T-cell (primary cell): ENCODE measurements at regions of chr16 and their contacts with region 1.

Region 1: GRCh38 chr16:11797166-11797956 is at the start of gene ZC3H7A:
- DNase-seq: peak; percentile 83 to 97 (median 91)
- ATAC-seq: peak; percentile 93 to 98 (median 98)
- H3K4me3 ChIP-seq: peak within 1 kb of the TSS; percentile 86 to 96
- H3K4me3 Mint-ChIP-seq: peak within 1 kb of the TSS; percentile 92 to 94 (median 93)
- H3K27ac ChIP-seq: peak within 1 kb of the TSS; percentile 94
- H3K27ac Mint-ChIP-seq: peak within 1 kb of the TSS; percentile 94 to 98
- H3K4me1 ChIP-seq: peaks cover 29 to 62% of the 10 kb centered on the region in 2 experiments
- H3K4me1 Mint-ChIP-seq: peaks cover 73 to 80% (median 79%) of the 10 kb centered on the region in 3 donors
- H3K27me3 ChIP-seq: no peaks in the 10 kb centered on the region
- H3K27me3 Mint-ChIP-seq: no peaks in the 10 kb centered on the region
- total RNA-seq, gene ZC3H7A: 57.6 to 115 (median 68.2) TPM

Region 2: DNA sequence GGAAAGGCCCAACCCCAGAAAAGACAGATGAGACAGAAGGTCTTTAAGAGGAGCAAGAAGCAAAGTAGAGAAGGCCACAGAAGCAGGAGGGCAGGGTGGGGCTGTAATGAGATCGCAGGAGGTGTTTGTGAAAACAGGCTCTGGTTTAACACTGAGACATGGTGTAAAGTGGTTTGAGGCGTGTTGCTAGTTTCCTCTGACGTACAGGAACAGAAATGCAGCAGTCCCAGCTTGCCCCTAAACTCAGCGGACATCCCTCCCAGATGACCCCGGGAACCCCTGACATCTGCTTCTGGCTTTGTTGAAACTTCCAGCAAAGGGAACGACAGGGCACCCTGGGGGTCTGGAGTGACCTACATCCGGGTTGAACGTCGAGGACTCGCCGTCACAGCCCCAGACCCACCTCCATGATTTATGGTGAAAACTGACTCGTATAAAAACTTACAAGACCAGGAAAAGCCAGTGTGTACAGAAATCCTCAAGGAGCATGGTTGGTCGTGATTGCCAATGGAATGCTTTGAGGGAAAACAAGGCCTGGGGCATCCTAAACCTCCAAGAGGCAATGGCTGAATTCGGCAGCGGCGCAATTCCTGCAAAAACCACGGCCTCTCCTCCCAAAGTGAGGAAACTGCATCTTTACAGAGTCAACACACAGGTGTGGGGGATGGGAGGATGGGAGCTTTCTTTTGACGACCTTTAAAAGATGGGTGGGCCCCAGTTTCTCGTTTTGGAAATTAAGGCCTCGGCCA is 236.5 kb before region 1 on chr16:
- CTCF ChIA-PET with region 1: interaction called in 1 of 2 experiments, 11 read pairs
- POLR2A ChIA-PET with region 1: no interaction called
- DNase-seq: peak; percentile 45 to 94 (median 82)
- ATAC-seq: peak; percentile 91 to 96 (median 93)
- H3K4me3 ChIP-seq: peak overlapping the region; percentile 48 to 64
- H3K4me3 Mint-ChIP-seq: peak overlapping the region; percentile 73 to 83 (median 79)
- H3K27ac ChIP-seq: peak overlapping the region; percentile 95
- H3K27ac Mint-ChIP-seq: peak overlapping the region; percentile 87 to 90
- H3K4me1 ChIP-seq: peaks cover 31 to 97% of the 10 kb centered on the region in 2 experiments
- H3K4me1 Mint-ChIP-seq: peaks cover 85 to 92% (median 87%) of the 10 kb centered on the region in 3 donors
- H3K27me3 ChIP-seq: no peaks in the 10 kb centered on the region
- H3K27me3 Mint-ChIP-seq: no peaks in the 10 kb centered on the region

Region 3: DNA sequence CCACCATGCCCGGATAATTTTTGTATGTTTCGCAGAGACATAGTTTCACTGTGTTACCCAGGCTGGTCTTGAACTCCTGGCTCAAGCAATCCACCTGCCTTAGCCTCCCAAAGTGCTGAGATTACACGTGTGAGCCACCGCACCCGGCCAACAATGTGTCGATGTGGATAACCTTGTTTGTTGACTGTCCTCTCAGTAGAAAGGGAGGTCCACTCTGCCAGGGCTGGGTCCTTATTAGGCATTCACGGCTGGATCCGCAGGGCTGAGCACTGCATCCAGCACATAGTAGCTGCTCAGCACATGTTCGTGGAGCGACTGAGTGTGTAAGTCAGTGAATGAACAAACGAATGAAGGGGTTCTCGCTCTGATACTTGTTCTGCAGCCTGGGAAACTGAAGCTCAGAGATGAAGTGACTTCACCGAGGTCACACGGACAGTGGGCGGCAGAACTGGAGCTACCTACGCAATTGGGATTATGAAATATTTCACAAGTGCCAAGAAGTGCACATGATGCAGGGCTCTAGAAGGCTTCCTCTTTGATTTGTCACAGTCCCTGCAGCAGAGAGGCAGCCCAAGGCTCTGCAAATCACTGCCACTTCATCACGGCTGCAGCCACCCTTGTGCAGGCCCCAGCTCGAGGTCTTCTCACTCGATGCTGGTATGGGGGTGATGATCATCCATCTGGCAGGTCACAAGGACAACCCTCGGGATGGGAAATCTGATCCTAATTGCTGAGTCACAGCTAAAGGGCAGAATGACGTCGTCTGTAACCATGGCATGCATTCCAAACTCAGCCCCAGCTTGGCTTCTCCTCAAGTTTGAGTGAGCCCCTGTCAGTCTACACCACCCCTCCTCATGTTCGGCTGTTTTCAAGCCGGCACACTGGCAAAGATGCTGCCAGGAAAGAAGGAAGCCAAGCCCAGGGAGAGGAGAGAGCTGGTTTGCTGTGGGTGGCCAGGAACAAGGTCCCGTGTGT is 157.1 kb before region 1 on chr16:
- CTCF ChIA-PET with region 1: interaction called in 1 of 2 experiments, 11 read pairs
- POLR2A ChIA-PET with region 1: no interaction called
- DNase-seq: peak in 5 of 35 experiments; percentile 14 to 53 (median 33)
- ATAC-seq: peak in 1 of 4 experiments; percentile 18
- H3K4me3 ChIP-seq: no peak overlapping the region
- H3K4me3 Mint-ChIP-seq: no peak overlapping the region
- H3K27ac ChIP-seq: no peak overlapping the region
- H3K27ac Mint-ChIP-seq: peak overlapping the region in 1 of 2 donors; percentile 48
- H3K4me1 ChIP-seq: peaks cover 4 to 17% of the 10 kb centered on the region in 2 experiments
- H3K4me1 Mint-ChIP-seq: peaks cover 15 to 31% (median 25%) of the 10 kb centered on the region in 3 donors
- H3K27me3 ChIP-seq: no peaks in the 10 kb centered on the region
- H3K27me3 Mint-ChIP-seq: no peaks in the 10 kb centered on the region

Region 4: DNA sequence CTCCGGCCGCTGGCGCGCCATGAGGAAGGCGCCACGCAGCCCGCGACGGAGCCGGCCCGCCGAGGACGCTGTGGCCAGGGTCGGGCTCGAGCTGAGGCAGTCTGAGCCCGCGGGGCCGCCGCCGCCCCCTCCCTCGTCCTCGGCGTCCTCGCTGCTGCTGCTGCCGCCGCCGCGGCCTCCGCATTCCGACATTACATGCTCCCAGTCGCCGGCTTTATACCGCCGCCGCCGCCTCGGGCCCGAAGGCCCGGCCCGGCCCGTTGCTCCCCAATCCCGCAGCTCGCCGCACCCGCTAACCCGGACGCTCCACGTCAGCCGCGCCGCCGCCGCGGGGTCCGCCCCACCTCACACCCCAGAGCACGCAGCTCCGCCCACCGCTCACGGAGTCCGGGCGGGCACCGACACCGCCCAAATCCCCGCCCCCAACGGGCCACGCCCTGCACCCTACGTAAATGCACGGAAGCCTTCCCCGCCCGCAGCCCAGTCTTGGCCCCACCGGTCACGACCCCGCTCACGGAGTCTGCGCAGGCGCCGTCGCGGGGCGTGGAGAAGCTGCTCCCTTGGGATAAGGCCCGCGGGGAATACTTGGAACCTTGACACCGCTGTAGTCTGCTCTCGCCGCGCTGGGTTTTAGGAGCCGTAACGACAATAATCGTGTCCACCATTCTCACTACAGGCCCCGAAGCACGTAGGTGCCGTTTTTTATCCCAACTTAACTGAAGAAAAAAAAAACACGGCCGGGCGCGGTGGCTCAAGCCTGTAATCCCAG is 54.6 kb before region 1 on chr16 and contains the start of gene TXNDC11:
- CTCF ChIA-PET with region 1: interaction called in 1 of 2 experiments, 20 read pairs
- POLR2A ChIA-PET with region 1: interaction called in 1 of 2 experiments, 13 read pairs
- DNase-seq: peak; percentile 96 to 100 (median 99)
- ATAC-seq: peak; percentile 91 to 97 (median 93)
- H3K4me3 ChIP-seq: peak within 1 kb of the TSS; percentile 62 to 86
- H3K4me3 Mint-ChIP-seq: peak within 1 kb of the TSS; percentile 90 to 96 (median 94)
- H3K27ac ChIP-seq: peak within 1 kb of the TSS; percentile 97
- H3K27ac Mint-ChIP-seq: peak within 1 kb of the TSS; percentile 93 to 96
- H3K4me1 ChIP-seq: peaks cover 5 to 47% of the 10 kb centered on the region in 2 experiments
- H3K4me1 Mint-ChIP-seq: peaks cover 51 to 57% (median 53%) of the 10 kb centered on the region in 3 donors
- H3K27me3 ChIP-seq: no peaks in the 10 kb centered on the region
- H3K27me3 Mint-ChIP-seq: no peaks in the 10 kb centered on the region
- total RNA-seq, gene TXNDC11: 44.0 to 76.3 (median 54.0) TPM

Region 5: DNA sequence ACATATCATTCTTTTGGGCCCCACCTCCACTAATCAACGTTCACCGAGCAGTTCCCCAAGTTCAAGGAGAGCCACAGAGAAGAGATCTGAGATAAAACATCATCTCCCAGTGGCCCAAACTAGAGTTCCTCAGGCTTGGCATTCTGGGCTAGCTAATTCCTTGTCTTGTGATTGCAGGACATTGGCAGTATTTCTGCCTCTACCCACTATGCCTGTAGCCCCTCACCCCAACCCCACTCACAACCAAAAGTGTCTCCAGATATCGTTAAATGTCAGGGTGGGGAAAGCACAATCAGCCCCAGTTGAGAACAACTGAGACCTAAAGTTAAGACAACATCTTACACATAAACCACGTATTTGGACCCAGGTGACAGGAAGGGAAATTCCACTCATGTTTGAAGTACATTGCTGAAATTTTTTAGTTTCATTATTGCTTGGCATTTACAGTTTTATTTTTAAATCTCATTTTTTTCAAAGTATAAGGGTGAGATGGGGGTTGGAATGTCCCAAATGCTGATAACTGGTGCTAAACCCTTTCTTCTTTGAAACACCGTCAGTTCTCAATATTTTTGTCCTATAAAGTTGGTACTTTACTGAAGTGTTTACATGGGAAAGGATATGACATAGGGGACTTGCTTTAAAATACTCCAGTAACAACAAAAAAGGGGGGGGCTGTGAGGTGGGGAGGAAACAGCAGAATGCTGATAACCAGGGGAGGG is 13.9 kb before region 1 on chr16:
- CTCF ChIA-PET with region 1: interaction called in 1 of 2 experiments, 37 read pairs
- POLR2A ChIA-PET with region 1: interaction called, 5 to 6 read pairs
- DNase-seq: peak in 32 of 35 experiments; percentile 29 to 90 (median 60)
- ATAC-seq: peak; percentile 75 to 85 (median 78)
- H3K4me3 ChIP-seq: peak overlapping the region; percentile 23 to 36
- H3K4me3 Mint-ChIP-seq: peak overlapping the region; percentile 80 to 83 (median 80)
- H3K27ac ChIP-seq: peak overlapping the region; percentile 97
- H3K27ac Mint-ChIP-seq: peak overlapping the region; percentile 95 to 97
- H3K4me1 ChIP-seq: peaks cover 38 to 67% of the 10 kb centered on the region in 2 experiments
- H3K4me1 Mint-ChIP-seq: peaks cover 66 to 71% (median 69%) of the 10 kb centered on the region in 3 donors
- H3K27me3 ChIP-seq: no peaks in the 10 kb centered on the region
- H3K27me3 Mint-ChIP-seq: no peaks in the 10 kb centered on the region

Region 6: DNA sequence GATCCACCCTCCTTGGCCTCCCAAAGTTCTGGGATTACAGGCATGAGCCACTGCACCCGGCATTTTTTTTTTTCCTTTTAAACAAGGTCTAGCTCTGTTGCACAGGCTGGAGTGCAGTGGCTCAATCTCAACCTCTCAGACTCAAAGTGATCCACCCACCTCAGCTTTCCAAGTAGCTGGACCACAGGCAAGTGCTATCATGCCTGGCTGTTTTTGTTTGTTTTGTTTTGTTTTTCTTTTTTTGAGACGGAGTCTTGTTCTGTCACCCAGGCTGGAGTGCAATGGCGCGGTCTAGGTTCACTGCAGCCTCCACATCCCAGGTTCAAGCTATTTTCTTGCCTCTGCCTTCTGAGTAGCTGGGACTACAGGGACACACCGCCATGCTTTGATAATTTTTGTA is 18.7 kb after region 1 on chr16:
- CTCF ChIA-PET with region 1: no interaction called
- POLR2A ChIA-PET with region 1: no interaction called
- DNase-seq: no peak
- ATAC-seq: no peak
- H3K4me3 ChIP-seq: no peak overlapping the region
- H3K4me3 Mint-ChIP-seq: no peak overlapping the region
- H3K27ac ChIP-seq: no peak overlapping the region
- H3K27ac Mint-ChIP-seq: no peak overlapping the region
- H3K4me1 ChIP-seq: no peaks in the 10 kb centered on the region
- H3K4me1 Mint-ChIP-seq: peaks cover 0 to 4% (median 4%) of the 10 kb centered on the region in 3 donors
- H3K27me3 ChIP-seq: no peaks in the 10 kb centered on the region
- H3K27me3 Mint-ChIP-seq: no peaks in the 10 kb centered on the region

Region 7: GRCh38 chr16:11949527-11949926 is 152.2 kb after region 1 on chr16:
- CTCF ChIA-PET with region 1: no interaction called
- POLR2A ChIA-PET with region 1: no interaction called
- DNase-seq: peak in 8 of 35 experiments; percentile 3 to 52 (median 8)
- ATAC-seq: peak in 2 of 4 experiments; percentile 19 to 55
- H3K4me3 ChIP-seq: no peak overlapping the region
- H3K4me3 Mint-ChIP-seq: no peak overlapping the region
- H3K27ac ChIP-seq: no peak overlapping the region
- H3K27ac Mint-ChIP-seq: no peak overlapping the region
- H3K4me1 ChIP-seq: no peaks in the 10 kb centered on the region
- H3K4me1 Mint-ChIP-seq: no peaks in the 10 kb centered on the region
- H3K27me3 ChIP-seq: no peaks in the 10 kb centered on the region
- H3K27me3 Mint-ChIP-seq: peaks cover 0 to 2% of the 10 kb centered on the region in 2 donors